Transverse colon (tissue), 4 donors: ENCODE measurements at regions of chr1 and their contacts with region 1.

Region 1: DNA sequence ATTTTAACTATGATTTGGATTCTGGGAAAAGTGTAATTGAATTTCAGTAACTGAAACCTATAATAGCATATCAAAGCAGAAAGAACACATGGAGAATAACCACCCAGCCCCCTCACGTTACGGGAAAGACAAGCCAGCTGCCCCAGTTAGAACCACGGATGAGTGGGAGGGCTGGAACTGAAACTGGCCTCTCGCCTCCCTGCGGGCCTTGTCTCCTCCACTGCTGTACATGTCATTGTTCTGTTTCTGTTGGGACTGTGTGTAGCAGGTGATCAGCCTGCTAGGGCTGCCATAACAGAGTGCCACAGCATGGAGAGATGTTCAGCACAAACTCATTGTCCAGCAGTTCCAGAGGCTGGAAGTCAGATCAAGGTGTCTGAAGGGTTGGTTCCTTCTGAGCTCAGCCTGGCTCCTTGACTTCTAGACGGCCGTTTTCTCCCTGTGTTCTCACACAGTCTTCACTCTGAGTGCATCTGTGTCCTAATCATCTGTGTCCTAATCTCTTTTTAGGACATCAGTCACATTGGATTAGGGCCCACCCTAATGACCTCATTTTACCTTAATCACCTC is 52.4 kb downstream of the MAP3K21 start:
- DNase-seq: no peak
- H3K4me3 ChIP-seq: no peak overlapping the region
- H3K27ac ChIP-seq: no peak overlapping the region
- H3K4me1 ChIP-seq: no peaks in the 10 kb centered on the region
- H3K27me3 ChIP-seq: no peaks in the 10 kb centered on the region
- CTCF ChIP-seq: no peak
- EP300 ChIP-seq: no peak
- POLR2A ChIP-seq: no peak

Region 2: GRCh38 chr1:233331676-233332519 is 48.1 kb before region 1 on chr1:
- in situ Hi-C with region 1: no loop called
- intact Hi-C with region 1: loop called (anchors 1 kb)
- DNase-seq: no peak
- H3K4me3 ChIP-seq: no peak overlapping the region
- H3K27ac ChIP-seq: no peak overlapping the region
- H3K4me1 ChIP-seq: peaks cover 0 to 26% (median 19%) of the 10 kb centered on the region in 4 donors
- H3K27me3 ChIP-seq: peaks cover 24% of the 10 kb centered on the region
- CTCF ChIP-seq: no peak
- EP300 ChIP-seq: no peak
- POLR2A ChIP-seq: no peak

Region 3: GRCh38 chr1:233490488-233490887 is 110.5 kb after region 1 on chr1:
- in situ Hi-C with region 1: no loop called
- intact Hi-C with region 1: no loop called
- DNase-seq: no peak
- H3K4me3 ChIP-seq: no peak overlapping the region
- H3K27ac ChIP-seq: no peak overlapping the region
- H3K4me1 ChIP-seq: no peaks in the 10 kb centered on the region
- H3K27me3 ChIP-seq: no peaks in the 10 kb centered on the region
- CTCF ChIP-seq: no peak
- EP300 ChIP-seq: no peak
- POLR2A ChIP-seq: no peak

Region 4: GRCh38 chr1:234458352-234459017 is 1078.5 kb after region 1 on chr1:
- in situ Hi-C with region 1: no loop called
- intact Hi-C with region 1: no loop called
- DNase-seq: no peak
- H3K4me3 ChIP-seq: no peak overlapping the region
- H3K27ac ChIP-seq: no peak overlapping the region
- H3K4me1 ChIP-seq: peaks cover 0 to 22% (median 7%) of the 10 kb centered on the region in 4 donors
- H3K27me3 ChIP-seq: no peaks in the 10 kb centered on the region
- CTCF ChIP-seq: no peak
- EP300 ChIP-seq: no peak
- POLR2A ChIP-seq: no peak